Activated T-helper 1 cell treated with anti-CD3 and anti-CD28 coated beads, Interleukin-12 subunit alpha, Interleukin-12 subunit beta, Interleukin-2, Interleukin-4 antibody, amounts not matched to agents 30 ng/mL and 10 ng/mL and 1 ng/mL, durations not matched to agents 14 hours and 24 hours and 36 hours (primary cell): ENCODE measurements at regions of chr1 and their contacts with region 1.

Region 1: DNA sequence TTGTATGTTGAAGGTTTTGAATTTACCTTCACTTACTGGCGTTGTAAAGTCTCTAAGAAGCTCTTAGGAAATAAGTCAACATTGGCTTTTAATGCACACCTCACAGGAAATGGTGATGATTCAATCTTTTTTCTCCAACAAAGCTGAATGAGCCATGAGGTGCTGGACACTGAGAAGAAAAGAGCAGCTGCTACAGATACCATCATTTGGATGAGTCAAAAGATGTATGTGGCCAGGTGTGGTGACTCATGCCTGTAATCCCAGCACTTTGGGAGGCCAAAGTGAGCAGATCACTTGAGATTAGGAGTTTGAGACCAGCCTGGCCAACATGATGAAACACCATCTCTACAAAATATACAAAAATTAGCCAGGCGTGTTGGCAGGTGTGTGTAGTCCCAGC is 3.3 kb upstream of the IL23R start:
- DNase-seq: peak; percentile 62
- H3K4me3 Mint-ChIP-seq: peak overlapping the region; percentile 55
- H3K27ac Mint-ChIP-seq: peak overlapping the region; percentile 93
- H3K4me1 Mint-ChIP-seq: peaks cover 65% of the 10 kb centered on the region
- H3K27me3 Mint-ChIP-seq: no peaks in the 10 kb centered on the region

Region 2: GRCh38 chr1:67097305-67097704 is 65.7 kb before region 1 on chr1:
- intact Hi-C with region 1: no loop called
- DNase-seq: no peak
- H3K4me3 Mint-ChIP-seq: no peak overlapping the region
- H3K27ac Mint-ChIP-seq: no peak overlapping the region
- H3K4me1 Mint-ChIP-seq: no peaks in the 10 kb centered on the region
- H3K27me3 Mint-ChIP-seq: peaks cover 22% of the 10 kb centered on the region

Region 3: DNA sequence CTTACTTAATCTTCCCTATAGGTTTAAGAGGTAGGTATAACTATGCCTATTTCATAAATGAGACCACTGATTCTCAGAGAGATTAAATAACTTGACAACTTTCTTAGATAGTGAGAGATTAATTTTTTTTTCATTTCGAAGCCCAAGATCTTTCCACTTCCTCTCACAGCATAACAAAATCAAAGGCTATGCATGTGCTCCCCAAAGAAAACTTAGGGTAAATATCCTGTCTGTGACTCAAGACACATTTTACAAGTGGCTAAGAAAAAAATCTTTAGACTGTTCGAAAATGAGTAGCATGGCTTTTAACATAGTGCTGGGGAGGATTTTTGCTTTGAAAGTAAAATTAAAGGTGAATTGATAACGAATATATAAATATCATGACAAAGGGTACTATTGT is 20.0 kb before region 1 on chr1:
- intact Hi-C with region 1: loop called (anchors 2 kb)
- DNase-seq: no peak
- H3K4me3 Mint-ChIP-seq: peak overlapping the region; percentile 28
- H3K27ac Mint-ChIP-seq: peak overlapping the region; percentile 45
- H3K4me1 Mint-ChIP-seq: peaks cover 36% of the 10 kb centered on the region
- H3K27me3 Mint-ChIP-seq: no peaks in the 10 kb centered on the region

Region 4: GRCh38 chr1:67194209-67194863 is 31.4 kb after region 1 on chr1:
- intact Hi-C with region 1: loop called (anchors 1 kb)
- DNase-seq: no peak
- H3K4me3 Mint-ChIP-seq: no peak overlapping the region
- H3K27ac Mint-ChIP-seq: no peak overlapping the region
- H3K4me1 Mint-ChIP-seq: peaks cover 38% of the 10 kb centered on the region
- H3K27me3 Mint-ChIP-seq: no peaks in the 10 kb centered on the region